ENCODE measurements at regions of chr10 and their contacts with region 1.

Region 1: DNA sequence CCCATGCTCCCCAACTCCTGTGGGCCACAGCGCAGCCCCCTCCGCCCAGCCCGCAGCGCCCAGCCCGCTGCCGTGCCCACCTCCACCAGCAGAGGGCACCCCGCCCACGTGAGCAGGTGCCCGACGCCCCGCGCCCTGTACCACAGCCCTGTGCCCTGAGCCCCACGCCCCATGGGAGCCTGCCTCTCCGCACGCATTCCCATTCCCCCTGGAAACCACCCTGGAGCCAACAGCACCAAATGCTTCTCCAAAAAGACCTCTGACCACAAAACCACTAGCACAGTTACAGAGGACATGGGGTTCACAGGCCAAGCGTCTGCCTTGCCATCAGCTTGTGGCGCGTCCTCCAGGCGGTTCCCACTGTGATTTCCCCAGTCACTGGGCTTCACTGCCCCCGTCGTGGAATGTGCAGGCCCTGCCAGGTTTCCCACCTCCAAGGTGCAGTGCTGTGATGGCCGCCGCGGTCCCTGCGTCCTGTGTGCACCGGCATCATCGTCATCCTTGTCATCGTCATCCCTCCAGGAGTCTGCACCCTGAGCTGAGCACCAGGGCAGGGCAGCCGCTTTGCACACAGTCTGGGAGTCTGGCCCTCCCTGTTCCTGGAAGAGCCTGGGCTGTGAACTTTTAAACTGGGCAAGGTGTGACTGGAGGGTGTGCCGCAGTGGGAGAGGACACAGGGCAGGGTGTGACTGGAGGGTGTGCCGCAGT is 61.7 kb downstream of the PWWP2B start:
- DNase-seq: peak in 7 of 10 donors; percentile 45 to 78 (median 62)
- H3K4me3 ChIP-seq: peak overlapping the region in 1 of 59 donors; percentile 14
- H3K27ac ChIP-seq: no peak overlapping the region
- H3K27me3 ChIP-seq: no peaks in the 10 kb centered on the region
- CTCF ChIP-seq: peak; percentile 59 to 99 (median 94)

Region 2: GRCh38 chr10:132371641-132372081 is 87.1 kb before region 1 on chr10:
- intact Hi-C with region 1: no loop called
- DNase-seq: peak in 1 of 10 donors; percentile 25
- H3K4me3 ChIP-seq: no peak overlapping the region
- H3K27ac ChIP-seq: no peak overlapping the region
- H3K27me3 ChIP-seq: no peaks in the 10 kb centered on the region
- CTCF ChIP-seq: peak in 7 of 56 donors; percentile 11 to 29 (median 20)

Region 3: GRCh38 chr10:132536971-132537712 is 78.4 kb after region 1 on chr10:
- intact Hi-C with region 1: loop called (anchors 2 to 5 kb)
- DNase-seq: peak; percentile 100
- H3K4me3 ChIP-seq: peak overlapping the region; percentile 60 to 93 (median 81)
- H3K27ac ChIP-seq: peak overlapping the region; percentile 9 to 96 (median 89)
- H3K27me3 ChIP-seq: no peaks in the 10 kb centered on the region
- CTCF ChIP-seq: peak in 48 of 56 donors; percentile 16 to 79 (median 46)

Region 4: DNA sequence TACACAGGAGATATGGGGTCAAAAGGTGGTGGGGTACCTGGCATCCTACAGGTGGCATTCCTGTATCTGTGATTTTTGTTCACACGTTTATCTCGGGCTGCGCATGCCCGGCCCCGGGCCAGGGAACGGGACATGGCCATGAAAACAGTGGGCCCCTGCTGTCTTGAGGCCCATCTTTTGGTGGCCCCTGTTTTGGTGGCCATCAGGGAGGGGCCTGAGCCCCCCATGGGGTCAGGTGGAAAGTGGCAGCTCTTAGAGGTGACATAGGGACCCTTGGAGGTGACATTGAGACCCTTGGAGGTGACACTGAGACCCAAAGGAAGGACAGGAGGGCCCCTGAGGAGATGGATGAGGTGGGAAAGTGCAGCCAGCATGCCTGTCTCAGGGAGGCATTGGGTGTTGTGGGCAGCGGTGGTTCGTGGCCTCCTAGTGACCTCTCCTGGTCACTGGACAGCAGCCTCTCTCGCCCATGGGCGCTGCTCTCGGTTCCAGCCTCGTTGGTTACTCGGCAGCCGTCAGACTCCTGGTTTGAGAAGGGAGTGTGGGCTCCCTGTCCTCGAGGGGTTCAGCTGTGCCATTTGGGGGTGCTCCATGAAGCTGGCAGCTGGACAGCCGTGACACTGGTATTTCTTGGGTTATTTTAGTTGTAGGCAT is 118.7 kb after region 1 on chr10:
- intact Hi-C with region 1: loop called (anchors 1 to 2 kb)
- DNase-seq: peak in 6 of 10 donors; percentile 37 to 74 (median 60)
- H3K4me3 ChIP-seq: no peak overlapping the region
- H3K27ac ChIP-seq: peak overlapping the region in 2 of 59 donors; percentile 27 to 38
- H3K27me3 ChIP-seq: no peaks in the 10 kb centered on the region
- CTCF ChIP-seq: peak in 53 of 56 donors; percentile 14 to 75 (median 49)

Region 5: GRCh38 chr10:132746801-132747625 is 288.3 kb after region 1 on chr10:
- intact Hi-C with region 1: no loop called
- DNase-seq: peak in 1 of 10 donors; percentile 65
- H3K4me3 ChIP-seq: no peak overlapping the region
- H3K27ac ChIP-seq: peak overlapping the region in 40 of 59 donors; percentile 0 to 73 (median 48)
- H3K27me3 ChIP-seq: no peaks in the 10 kb centered on the region
- CTCF ChIP-seq: no peak